ENCODE measurements at regions of chr20 and their contacts with region 1.

Region 1: GRCh38 chr20:23937303-23938117 is 51.1 kb downstream of the GGTLC1 start:
- DNase-seq: peak; percentile 43 to 82 (median 66)
- ATAC-seq: peak; percentile 96
- H3K4me3 ChIP-seq: no peak overlapping the region
- H3K4me3 Mint-ChIP-seq: no peak overlapping the region
- H3K27ac ChIP-seq: no peak overlapping the region
- H3K27ac Mint-ChIP-seq: no peak overlapping the region
- H3K4me1 ChIP-seq: no peaks in the 10 kb centered on the region
- H3K4me1 Mint-ChIP-seq: no peaks in the 10 kb centered on the region
- H3K27me3 ChIP-seq: no peaks in the 10 kb centered on the region
- H3K27me3 Mint-ChIP-seq: no peaks in the 10 kb centered on the region
- CTCF ChIP-seq: peak; percentile 71

Region 2: GRCh38 chr20:23954008-23954745 is 16.7 kb after region 1 on chr20:
- CTCF ChIA-PET with region 1: interaction called, 15 read pairs
- POLR2A ChIA-PET with region 1: interaction called, 3 read pairs
- intact Hi-C with region 1: no loop called
- DNase-seq: no peak
- ATAC-seq: no peak
- H3K4me3 ChIP-seq: no peak overlapping the region
- H3K4me3 Mint-ChIP-seq: no peak overlapping the region
- H3K27ac ChIP-seq: no peak overlapping the region
- H3K27ac Mint-ChIP-seq: no peak overlapping the region
- H3K4me1 ChIP-seq: no peaks in the 10 kb centered on the region
- H3K4me1 Mint-ChIP-seq: no peaks in the 10 kb centered on the region
- H3K27me3 ChIP-seq: no peaks in the 10 kb centered on the region
- H3K27me3 Mint-ChIP-seq: peaks cover 6% of the 10 kb centered on the region
- CTCF ChIP-seq: no peak

Region 3: GRCh38 chr20:24100385-24101011 is 163.0 kb after region 1 on chr20:
- CTCF ChIA-PET with region 1: interaction called, 37 read pairs
- POLR2A ChIA-PET with region 1: no interaction called
- intact Hi-C with region 1: loop called (anchors 1 kb)
- DNase-seq: peak; percentile 16 to 78 (median 59)
- ATAC-seq: peak; percentile 93
- H3K4me3 ChIP-seq: no peak overlapping the region
- H3K4me3 Mint-ChIP-seq: no peak overlapping the region
- H3K27ac ChIP-seq: no peak overlapping the region
- H3K27ac Mint-ChIP-seq: no peak overlapping the region
- H3K4me1 ChIP-seq: peaks cover 4% of the 10 kb centered on the region
- H3K4me1 Mint-ChIP-seq: peaks cover 4% of the 10 kb centered on the region
- H3K27me3 ChIP-seq: no peaks in the 10 kb centered on the region
- H3K27me3 Mint-ChIP-seq: peaks cover 2% of the 10 kb centered on the region
- CTCF ChIP-seq: peak; percentile 75

Region 4: DNA sequence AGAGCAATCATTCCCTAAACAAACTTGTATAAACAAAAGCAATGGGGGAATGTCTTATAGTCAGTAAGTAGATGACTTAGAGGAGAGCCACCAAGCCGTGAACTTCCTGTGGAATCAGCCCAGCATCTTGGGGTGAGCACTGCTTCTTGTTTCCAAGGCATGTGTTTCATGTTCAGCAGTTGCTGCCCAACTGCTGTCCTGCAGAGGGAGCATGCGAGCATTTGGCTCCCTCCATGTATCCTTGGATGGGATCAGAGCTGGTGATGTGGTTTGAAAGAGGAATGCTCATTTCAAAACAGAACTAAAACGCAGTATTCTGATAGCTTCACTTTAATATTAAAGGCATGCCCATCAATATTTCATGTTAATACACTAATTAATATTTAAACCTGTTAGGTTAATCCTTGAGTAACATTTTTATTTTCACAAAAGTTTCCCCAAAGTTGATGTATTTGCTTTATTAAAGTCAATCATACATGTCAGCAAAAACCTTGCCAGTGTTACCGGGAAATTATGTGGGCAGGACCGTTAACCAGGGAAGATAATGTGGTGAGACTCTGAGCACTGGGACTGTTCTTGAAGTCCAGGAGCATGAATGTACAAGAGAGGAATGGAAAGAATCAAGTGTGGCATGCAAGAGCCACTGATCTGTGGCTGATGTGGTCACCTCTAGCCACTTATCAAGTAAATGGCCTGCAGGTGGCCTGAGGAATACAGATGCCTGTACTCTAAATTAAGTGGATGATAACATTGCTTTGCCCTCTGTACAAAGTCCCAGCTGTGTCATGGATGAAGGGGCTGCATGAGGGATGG is 223.3 kb after region 1 on chr20:
- CTCF ChIA-PET with region 1: interaction called, 16 read pairs
- POLR2A ChIA-PET with region 1: no interaction called
- intact Hi-C with region 1: loop called (anchors 1 kb)
- DNase-seq: peak in 2 of 9 experiments; percentile 20 to 46
- ATAC-seq: no peak
- H3K4me3 ChIP-seq: no peak overlapping the region
- H3K4me3 Mint-ChIP-seq: no peak overlapping the region
- H3K27ac ChIP-seq: no peak overlapping the region
- H3K27ac Mint-ChIP-seq: no peak overlapping the region
- H3K4me1 ChIP-seq: no peaks in the 10 kb centered on the region
- H3K4me1 Mint-ChIP-seq: peaks cover 2% of the 10 kb centered on the region
- H3K27me3 ChIP-seq: no peaks in the 10 kb centered on the region
- H3K27me3 Mint-ChIP-seq: peaks cover 2% of the 10 kb centered on the region
- CTCF ChIP-seq: peak; percentile 24

Region 5: GRCh38 chr20:25065625-25066338 is 1128.3 kb after region 1 on chr20:
- CTCF ChIA-PET with region 1: interaction called, 7 read pairs
- POLR2A ChIA-PET with region 1: no interaction called
- intact Hi-C with region 1: loop called in 1 of 2 experiments (anchors 1 kb)
- DNase-seq: peak; percentile 45 to 83 (median 69)
- ATAC-seq: peak; percentile 83
- H3K4me3 ChIP-seq: no peak overlapping the region
- H3K4me3 Mint-ChIP-seq: no peak overlapping the region
- H3K27ac ChIP-seq: no peak overlapping the region
- H3K27ac Mint-ChIP-seq: no peak overlapping the region
- H3K4me1 ChIP-seq: peaks cover 3% of the 10 kb centered on the region
- H3K4me1 Mint-ChIP-seq: peaks cover 8% of the 10 kb centered on the region
- H3K27me3 ChIP-seq: peaks cover 0 to 13% of the 10 kb centered on the region in 2 experiments
- H3K27me3 Mint-ChIP-seq: peaks cover 18% of the 10 kb centered on the region
- CTCF ChIP-seq: peak; percentile 75

Region 6: DNA sequence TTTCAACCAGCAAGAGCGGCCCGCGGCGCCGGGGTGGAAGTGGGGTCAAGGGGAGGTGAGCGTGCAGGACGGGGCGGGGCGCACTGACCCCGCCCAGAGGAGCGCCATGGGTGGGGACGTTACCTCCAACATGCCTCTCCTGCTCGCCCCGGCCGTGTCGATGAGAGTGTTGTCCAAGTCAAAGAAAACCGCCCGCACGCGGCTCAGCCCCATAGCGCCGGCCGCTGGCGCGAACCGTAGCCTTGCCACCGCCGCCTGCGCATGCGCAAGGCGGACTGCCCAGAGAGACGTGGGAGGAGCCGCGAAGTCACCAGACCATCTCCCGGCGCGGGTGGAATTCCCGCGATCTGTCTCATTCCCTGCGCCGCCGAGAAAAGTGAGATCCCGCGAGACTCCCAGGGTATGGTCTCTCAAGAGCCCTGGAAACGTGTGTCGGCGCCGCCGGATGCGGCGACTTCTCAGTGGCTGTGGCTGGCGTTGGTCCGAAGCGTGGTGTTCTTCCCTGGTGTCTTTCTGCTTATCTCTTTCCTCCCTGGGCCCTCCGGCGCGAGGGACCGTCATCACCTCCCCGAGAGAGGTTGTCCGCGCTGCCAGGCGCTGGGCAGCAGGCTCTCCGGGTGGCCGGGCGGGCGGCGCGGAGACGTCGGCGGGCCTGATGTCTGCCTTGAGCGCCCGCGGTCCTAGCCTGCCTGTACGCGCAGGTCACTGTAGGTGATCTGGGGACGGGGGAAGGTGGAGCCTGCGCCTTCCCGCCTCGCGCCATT is 1686.4 kb after region 1 on chr20 and contains the start of gene NANP:
- CTCF ChIA-PET with region 1: no interaction called
- POLR2A ChIA-PET with region 1: no interaction called
- intact Hi-C with region 1: no loop called
- DNase-seq: peak; percentile 56 to 94 (median 78)
- ATAC-seq: peak; percentile 79
- H3K4me3 ChIP-seq: peak within 1 kb of the TSS; percentile 73 to 82
- H3K4me3 Mint-ChIP-seq: peak within 1 kb of the TSS; percentile 96
- H3K27ac ChIP-seq: peak within 1 kb of the TSS; percentile 48 to 67
- H3K27ac Mint-ChIP-seq: peak within 1 kb of the TSS; percentile 94
- H3K4me1 ChIP-seq: peaks cover 11% of the 10 kb centered on the region
- H3K4me1 Mint-ChIP-seq: peaks cover 20% of the 10 kb centered on the region
- H3K27me3 ChIP-seq: no peaks in the 10 kb centered on the region
- H3K27me3 Mint-ChIP-seq: no peaks in the 10 kb centered on the region
- CTCF ChIP-seq: no peak
- total RNA-seq, gene NANP: 2.0 to 2.2 TPM